Activated CD4-positive, alpha-beta memory T cell treated with anti-CD3 and anti-CD28 coated beads for 36 hours (primary cell): ENCODE measurements at regions of chr15 and their contacts with region 1.

Region 1: GRCh38 chr15:40857601-40858341 is 13.9 kb downstream of the SPINT1 start:
- DNase-seq: peak; percentile 88
- H3K4me3 Mint-ChIP-seq: no peak overlapping the region
- H3K27ac Mint-ChIP-seq: no peak overlapping the region
- H3K4me1 Mint-ChIP-seq: peaks cover 5% of the 10 kb centered on the region
- H3K27me3 Mint-ChIP-seq: no peaks in the 10 kb centered on the region

Region 2: GRCh38 chr15:40684381-40684780 is 173.4 kb before region 1 on chr15:
- CTCF ChIA-PET with region 1: interaction called, 10 read pairs
- POLR2A ChIA-PET with region 1: no interaction called
- intact Hi-C with region 1: no loop called
- DNase-seq: no peak
- H3K4me3 Mint-ChIP-seq: no peak overlapping the region
- H3K27ac Mint-ChIP-seq: no peak overlapping the region
- H3K4me1 Mint-ChIP-seq: no peaks in the 10 kb centered on the region
- H3K27me3 Mint-ChIP-seq: no peaks in the 10 kb centered on the region

Region 3: GRCh38 chr15:40814901-40815670 is 42.7 kb before region 1 on chr15:
- CTCF ChIA-PET with region 1: interaction called, 12 read pairs
- POLR2A ChIA-PET with region 1: no interaction called
- intact Hi-C with region 1: no loop called
- DNase-seq: no peak
- H3K4me3 Mint-ChIP-seq: no peak overlapping the region
- H3K27ac Mint-ChIP-seq: no peak overlapping the region
- H3K4me1 Mint-ChIP-seq: no peaks in the 10 kb centered on the region
- H3K27me3 Mint-ChIP-seq: no peaks in the 10 kb centered on the region

Region 4: DNA sequence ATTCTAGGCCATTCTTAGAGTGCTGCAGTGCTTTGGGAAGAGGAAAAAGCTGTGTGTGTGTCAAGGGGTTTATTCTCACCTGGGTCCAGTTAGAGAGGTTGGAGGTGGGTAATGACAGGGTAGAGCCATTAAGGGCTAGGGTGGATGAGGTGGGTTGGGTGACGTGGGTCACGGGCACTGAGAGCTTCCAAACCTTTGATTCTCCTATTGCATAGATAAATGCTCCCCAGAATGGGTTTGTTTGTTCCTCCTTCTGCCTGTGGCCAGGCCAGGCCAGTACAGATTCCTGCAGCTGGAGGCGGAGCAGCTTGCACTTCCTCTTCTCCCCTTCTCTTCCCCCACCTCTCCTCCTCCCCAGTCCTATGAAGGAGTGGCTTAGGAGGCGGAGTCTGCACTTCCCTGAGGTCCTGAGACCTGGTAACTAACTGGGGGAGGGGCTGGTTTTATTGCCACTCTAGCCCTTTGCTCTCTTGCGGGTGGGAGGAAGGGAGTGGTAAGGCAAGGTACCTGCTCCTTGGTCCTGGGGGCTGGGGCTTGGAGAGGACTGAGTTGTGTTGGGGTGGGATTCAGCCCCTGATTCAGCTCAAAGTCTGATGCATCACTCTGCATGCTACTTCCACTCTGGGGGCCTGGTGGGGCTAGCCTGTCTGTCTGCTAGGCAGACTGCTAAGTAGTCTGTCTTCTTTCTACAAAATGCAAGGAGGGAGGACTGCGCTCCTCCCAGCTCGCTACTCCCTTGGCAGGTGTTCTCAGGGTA is 10.4 kb before region 1 on chr15:
- CTCF ChIA-PET with region 1: interaction called, 109 read pairs
- POLR2A ChIA-PET with region 1: interaction called, 4 read pairs
- intact Hi-C with region 1: no loop called
- DNase-seq: no peak
- H3K4me3 Mint-ChIP-seq: no peak overlapping the region
- H3K27ac Mint-ChIP-seq: no peak overlapping the region
- H3K4me1 Mint-ChIP-seq: peaks cover 27% of the 10 kb centered on the region
- H3K27me3 Mint-ChIP-seq: peaks cover 6% of the 10 kb centered on the region

Region 5: GRCh38 chr15:40879604-40880003 is 21.8 kb after region 1 on chr15:
- CTCF ChIA-PET with region 1: interaction called, 267 read pairs
- POLR2A ChIA-PET with region 1: interaction called, 3 read pairs
- intact Hi-C with region 1: no loop called
- DNase-seq: no peak
- H3K4me3 Mint-ChIP-seq: no peak overlapping the region
- H3K27ac Mint-ChIP-seq: no peak overlapping the region
- H3K4me1 Mint-ChIP-seq: peaks cover 13% of the 10 kb centered on the region
- H3K27me3 Mint-ChIP-seq: peaks cover under 1% of the 10 kb centered on the region